ENCODE measurements at regions of chr5 and their contacts with region 1.

Region 1: DNA sequence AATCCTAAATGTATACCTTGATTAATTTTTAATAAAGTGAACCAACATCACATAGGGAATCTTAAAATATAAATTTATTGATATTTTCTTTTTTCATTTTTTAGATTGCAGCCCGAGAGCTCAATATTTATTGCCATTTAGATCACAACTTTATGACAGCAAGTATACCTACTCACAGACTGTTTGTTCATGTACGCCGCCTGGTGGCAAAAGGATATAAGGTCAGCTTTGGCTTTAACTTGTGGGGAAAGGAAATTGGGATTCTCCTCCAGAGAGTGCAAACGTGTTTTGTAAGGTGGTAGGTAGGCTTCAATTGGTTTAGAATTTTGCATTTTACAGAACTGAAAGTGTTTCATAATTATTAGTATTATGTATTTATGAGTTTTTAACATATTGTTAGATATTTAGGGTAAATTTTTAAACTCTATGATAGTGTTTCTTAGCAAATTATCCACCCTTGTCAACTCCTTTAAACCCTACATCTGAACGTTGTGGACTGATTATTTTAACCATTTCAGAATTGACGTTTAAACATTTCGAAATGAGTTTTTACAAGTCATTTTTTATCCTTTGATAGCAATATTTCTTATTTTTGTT is 17.5 kb upstream of the DHFR start:
- DNase-seq: peak; percentile 80
- ATAC-seq: peak; percentile 79
- H3K4me3 Mint-ChIP-seq: no peak overlapping the region
- H3K27ac Mint-ChIP-seq: 0 out of 2 replicates have a peak overlapping the region, but pooled peaks have one; percentile 72
- H3K4me1 Mint-ChIP-seq: peaks cover 5% of the 10 kb centered on the region; the same call in 1 of the 2 replicates
- H3K27me3 Mint-ChIP-seq: no peaks in the 10 kb centered on the region; the same call in 1 of the 2 replicates
- CTCF ChIP-seq: peak; percentile 74

Region 2: GRCh38 chr5:80346055-80346454 is 326.2 kb before region 1 on chr5:
- CTCF ChIA-PET with region 1: interaction called, 10 read pairs
- POLR2A ChIA-PET with region 1: no interaction called
- DNase-seq: peak; percentile 37
- ATAC-seq: peak; percentile 88
- H3K4me3 Mint-ChIP-seq: no peak overlapping the region
- H3K27ac Mint-ChIP-seq: no peak overlapping the region
- H3K4me1 Mint-ChIP-seq: no peaks in the 10 kb centered on the region
- H3K27me3 Mint-ChIP-seq: no peaks in the 10 kb centered on the region
- CTCF ChIP-seq: peak; percentile 31; the same call in 1 of the 2 replicates

Region 3: DNA sequence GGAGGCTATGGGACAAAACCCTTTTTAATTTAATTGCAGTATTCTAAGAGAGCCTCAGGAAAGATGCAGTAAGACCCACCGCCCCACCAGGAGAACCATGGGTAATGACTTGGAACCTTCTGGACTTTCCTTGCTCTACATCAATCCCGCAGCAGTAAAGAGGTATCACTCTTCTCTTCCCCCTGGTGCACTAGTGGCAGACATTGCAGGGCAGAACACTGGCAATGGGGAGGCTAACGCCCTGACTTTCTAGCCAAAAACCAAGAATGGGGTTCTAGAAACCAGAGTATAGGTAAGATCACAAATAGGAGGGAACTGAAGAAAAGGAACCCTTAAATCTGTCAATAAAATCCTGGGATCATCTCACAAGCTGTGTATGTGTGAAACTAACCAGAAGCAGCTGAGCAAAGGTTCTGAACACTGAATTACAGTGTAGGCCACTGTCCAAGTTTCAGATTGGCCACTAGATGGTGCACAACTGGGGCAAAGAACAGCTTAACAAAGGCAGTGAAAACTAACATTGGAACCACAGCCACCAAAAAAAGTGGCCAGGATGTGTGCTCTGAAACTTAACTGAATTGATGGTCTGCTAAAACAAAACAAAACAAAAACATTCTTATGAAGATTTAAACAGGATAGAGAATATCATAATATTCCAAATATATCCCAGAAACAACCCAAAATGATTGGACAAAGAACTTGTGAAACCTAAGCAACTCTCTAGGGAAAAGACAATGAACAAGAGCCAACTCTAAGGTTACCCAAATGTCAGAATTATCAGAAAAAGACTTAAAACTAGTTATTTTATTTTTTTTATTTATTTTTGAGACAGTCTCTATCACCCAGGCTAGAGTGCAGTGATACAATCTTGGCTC is 191.0 kb before region 1 on chr5:
- CTCF ChIA-PET with region 1: interaction called, 16 read pairs
- POLR2A ChIA-PET with region 1: no interaction called
- DNase-seq: peak; percentile 34
- ATAC-seq: peak; percentile 90
- H3K4me3 Mint-ChIP-seq: no peak overlapping the region
- H3K27ac Mint-ChIP-seq: peak overlapping the region; percentile 79
- H3K4me1 Mint-ChIP-seq: peaks cover 19% of the 10 kb centered on the region
- H3K27me3 Mint-ChIP-seq: no peaks in the 10 kb centered on the region
- CTCF ChIP-seq: peak; percentile 42; the same call in 1 of the 2 replicates

Region 4: DNA sequence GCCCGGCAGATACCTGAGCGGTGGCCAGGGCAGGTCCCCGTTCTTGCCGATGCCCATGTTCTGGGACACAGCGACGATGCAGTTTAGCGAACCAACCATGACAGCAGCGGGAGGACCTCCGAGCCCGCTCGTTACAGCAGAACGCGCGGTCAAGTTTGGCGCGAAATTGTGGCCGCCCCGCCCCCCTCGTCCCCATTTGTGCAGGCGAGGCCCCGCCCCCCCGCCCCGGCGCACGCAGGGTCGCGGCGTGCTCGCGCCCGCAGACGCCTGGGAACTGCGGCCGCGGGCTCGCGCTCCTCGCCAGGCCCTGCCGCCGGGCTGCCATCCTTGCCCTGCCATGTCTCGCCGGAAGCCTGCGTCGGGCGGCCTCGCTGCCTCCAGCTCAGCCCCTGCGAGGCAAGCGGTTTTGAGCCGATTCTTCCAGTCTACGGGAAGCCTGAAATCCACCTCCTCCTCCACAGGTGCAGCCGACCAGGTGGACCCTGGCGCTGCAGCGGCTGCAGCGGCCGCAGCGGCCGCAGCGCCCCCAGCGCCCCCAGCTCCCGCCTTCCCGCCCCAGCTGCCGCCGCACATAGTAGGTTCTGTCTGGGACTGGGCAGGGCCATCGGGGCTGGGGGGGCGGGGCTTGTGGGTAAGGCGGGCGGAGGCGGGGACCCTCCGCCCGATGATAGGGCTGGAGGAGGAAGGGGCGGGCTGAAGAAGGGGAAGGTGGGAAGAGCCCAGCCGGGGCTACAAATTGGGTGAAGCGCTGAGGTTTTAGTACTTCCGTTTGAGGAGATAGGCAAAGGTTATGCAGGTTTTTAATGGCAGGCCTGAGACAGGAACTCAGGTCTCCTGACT is 17.6 kb before region 1 on chr5 and contains the starts of genes DHFR and MSH3:
- CTCF ChIA-PET with region 1: interaction called, 14 read pairs
- POLR2A ChIA-PET with region 1: interaction called, 7 read pairs
- DNase-seq: peak; percentile 87
- ATAC-seq: peak; percentile 76
- H3K4me3 Mint-ChIP-seq: peak within 1 kb of the TSS; percentile 91
- H3K27ac Mint-ChIP-seq: peak within 1 kb of the TSS; percentile 91
- H3K4me1 Mint-ChIP-seq: peaks cover 26% of the 10 kb centered on the region
- H3K27me3 Mint-ChIP-seq: no peaks in the 10 kb centered on the region
- CTCF ChIP-seq: no peak
- total RNA-seq, gene DHFR: 64.0 to 68.0 TPM (median 64.4 TPM) in 3 replicates
- total RNA-seq, gene MSH3: 14.6 to 17.6 TPM (median 16.7 TPM) in 3 replicates

Region 5: DNA sequence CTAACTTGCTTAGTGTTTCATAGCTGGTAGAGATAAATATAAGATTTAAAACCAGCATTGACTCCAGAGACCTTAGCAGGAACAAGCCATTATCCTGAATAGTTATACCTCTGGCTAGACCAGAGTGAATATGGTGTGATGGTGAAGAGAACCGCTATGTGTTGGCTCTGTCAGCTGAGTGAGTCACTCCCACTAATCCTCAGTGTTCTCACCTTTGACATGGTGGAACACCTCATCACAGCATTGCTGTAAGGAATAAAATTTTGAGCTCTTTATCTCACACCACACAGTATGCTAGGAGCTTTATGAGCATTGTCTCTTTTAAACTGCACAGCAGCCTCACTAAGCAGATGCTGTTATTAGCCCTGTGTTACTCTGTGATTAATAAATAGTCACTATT is 73.3 kb after region 1 on chr5:
- CTCF ChIA-PET with region 1: no interaction called
- POLR2A ChIA-PET with region 1: no interaction called
- DNase-seq: no peak
- ATAC-seq: no peak
- H3K4me3 Mint-ChIP-seq: no peak overlapping the region
- H3K27ac Mint-ChIP-seq: no peak overlapping the region
- H3K4me1 Mint-ChIP-seq: peaks cover 19% of the 10 kb centered on the region
- H3K27me3 Mint-ChIP-seq: no peaks in the 10 kb centered on the region
- CTCF ChIP-seq: no peak

Measured in WTC11 (cell line).